H1 (cell line): ENCODE measurements at regions of chr21 and their contacts with region 1.

Region 1: GRCh38 chr21:39373644-39374043 is 24.8 kb upstream of the HMGN1 start:
- DNase-seq: no peak
- H3K4me3 ChIP-seq: no peak overlapping the region
- H3K27ac ChIP-seq: no peak overlapping the region
- H3K4me1 ChIP-seq: peaks cover 0 to 5% (median 3%) of the 10 kb centered on the region in 4 experiments; a peak in 3 of 7 replicates
- H3K27me3 ChIP-seq: no peaks in the 10 kb centered on the region
- CTCF ChIP-seq: peak in 2 of 3 experiments; percentile 20 to 49; a peak in 3 of 4 replicates
- EP300 ChIP-seq: no peak
- POLR2A ChIP-seq: no peak
- RAD21 ChIP-seq: peak; percentile 43 to 57

Region 2: DNA sequence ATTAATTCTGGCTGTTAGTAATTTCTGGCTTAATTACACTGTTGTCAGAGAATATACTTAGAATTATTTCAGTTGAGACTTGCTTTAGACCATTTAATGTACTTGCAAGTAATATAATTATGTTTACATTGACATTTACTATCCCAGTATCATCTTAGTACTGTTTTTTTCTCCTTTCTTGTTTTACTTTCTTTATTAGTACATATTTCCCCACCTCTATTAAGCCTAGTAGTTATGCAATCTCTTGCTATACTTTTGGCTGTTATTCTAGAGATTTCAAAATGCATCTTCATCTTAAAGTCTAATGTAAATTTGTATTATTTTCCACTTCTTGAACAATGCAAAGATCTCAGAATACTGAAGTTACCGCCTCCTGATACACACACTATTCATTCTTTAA is 84.7 kb before region 1 on chr21:
- CTCF ChIA-PET with region 1: no interaction called
- POLR2A ChIA-PET with region 1: no interaction called
- DNase-seq: no peak
- H3K4me3 ChIP-seq: no peak overlapping the region
- H3K27ac ChIP-seq: no peak overlapping the region
- H3K4me1 ChIP-seq: no peaks in the 10 kb centered on the region
- H3K27me3 ChIP-seq: no peaks in the 10 kb centered on the region
- CTCF ChIP-seq: no peak
- EP300 ChIP-seq: no peak
- POLR2A ChIP-seq: no peak
- RAD21 ChIP-seq: no peak

Region 3: DNA sequence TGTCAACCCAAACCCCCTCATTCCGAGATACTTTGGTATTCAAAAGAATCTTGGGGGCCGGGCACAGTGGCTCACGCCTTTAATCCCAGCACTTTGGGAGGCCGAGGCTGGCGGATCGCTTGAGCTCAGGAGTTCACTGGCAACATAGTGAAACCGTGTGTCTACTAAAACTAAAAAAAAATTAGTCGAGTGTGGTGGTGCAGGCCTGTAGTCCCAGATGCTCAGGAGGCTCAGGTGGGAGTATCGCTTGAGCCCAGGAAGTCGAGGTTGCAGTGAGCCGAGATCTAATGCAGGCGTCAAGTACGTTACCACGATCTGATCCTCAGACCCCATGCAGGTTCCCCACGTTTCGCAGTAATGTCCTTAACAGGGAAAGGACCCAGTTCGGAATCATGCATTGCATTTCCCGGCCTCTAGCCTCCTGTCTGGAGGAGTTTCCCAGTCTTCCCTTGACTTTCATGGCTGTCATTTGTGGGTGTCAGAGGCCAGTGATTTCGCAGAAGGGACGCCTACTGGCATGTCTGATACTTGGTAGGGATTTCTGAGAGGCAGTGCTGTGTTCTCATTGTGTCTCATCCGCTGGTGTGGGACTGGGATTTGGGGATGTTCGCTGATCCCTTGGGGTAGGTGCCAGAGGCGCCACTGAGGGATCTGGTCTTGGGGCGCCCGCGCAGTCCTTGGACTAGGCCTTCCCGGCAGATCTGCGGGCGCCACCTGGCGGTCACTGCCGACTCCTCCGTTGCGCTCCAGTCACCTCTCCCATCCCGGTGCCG is 14.6 kb after region 1 on chr21:
- CTCF ChIA-PET with region 1: interaction called, 25 read pairs
- POLR2A ChIA-PET with region 1: interaction called, 3 read pairs
- DNase-seq: peak; percentile 79 to 99
- H3K4me3 ChIP-seq: peak overlapping the region; percentile 4 to 55 (median 38); a peak in 6 of 8 replicates
- H3K27ac ChIP-seq: no peak overlapping the region
- H3K4me1 ChIP-seq: peaks cover 0 to 2% (median 0%) of the 10 kb centered on the region in 4 experiments; a peak in 1 of 7 replicates
- H3K27me3 ChIP-seq: no peaks in the 10 kb centered on the region
- CTCF ChIP-seq: peak; percentile 91 to 94 (median 92)
- EP300 ChIP-seq: no peak
- POLR2A ChIP-seq: no peak
- RAD21 ChIP-seq: peak; percentile 87 to 92